ENCODE measurements at regions of chr10 and their contacts with region 1.

Region 1: GRCh38 chr10:102835007-102835482 is 2.2 kb downstream of the CYP17A1 start:
- DNase-seq: peak; percentile 74
- ATAC-seq: peak; percentile 99
- H3K4me3 ChIP-seq: no peak overlapping the region
- H3K27ac ChIP-seq: no peak overlapping the region; the same call in 1 of the 2 replicates
- H3K4me1 ChIP-seq: 0 out of 2 replicates have a peak, but pooled peaks cover 4% of the 10 kb centered on the region
- H3K27me3 ChIP-seq: no peaks in the 10 kb centered on the region
- CTCF ChIP-seq: peak; percentile 93

Region 2: DNA sequence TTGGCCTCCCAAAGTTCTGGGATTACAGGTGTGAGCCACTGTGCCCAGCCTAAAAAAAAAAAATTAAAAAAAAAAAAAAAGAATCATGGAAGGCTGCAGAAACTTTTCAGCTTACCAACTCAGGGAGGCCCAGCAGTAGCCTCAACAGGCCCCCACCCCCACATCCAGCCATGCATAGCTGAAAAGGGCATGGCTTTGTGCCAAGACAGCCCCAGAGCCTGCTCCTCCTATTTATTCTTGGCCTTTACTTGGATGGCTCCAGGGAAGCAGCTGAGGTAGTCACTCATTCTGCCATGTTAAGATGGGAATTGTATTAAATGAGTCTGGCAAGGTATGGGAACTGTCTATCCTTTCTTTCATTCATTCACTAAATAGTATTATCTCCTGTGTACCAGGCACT is 69.3 kb after region 1 on chr10:
- CTCF ChIA-PET with region 1: interaction called, 6 read pairs
- POLR2A ChIA-PET with region 1: no interaction called
- in situ Hi-C with region 1: no loop called
- intact Hi-C with region 1: loop called (anchors 1 kb)
- DNase-seq: no peak
- ATAC-seq: no peak
- H3K4me3 ChIP-seq: no peak overlapping the region
- H3K27ac ChIP-seq: no peak overlapping the region
- H3K4me1 ChIP-seq: no peaks in the 10 kb centered on the region
- H3K27me3 ChIP-seq: no peaks in the 10 kb centered on the region
- CTCF ChIP-seq: no peak

Region 3: GRCh38 chr10:103069453-103070331 is 234.6 kb after region 1 on chr10:
- CTCF ChIA-PET with region 1: no interaction called
- POLR2A ChIA-PET with region 1: no interaction called
- in situ Hi-C with region 1: no loop called
- intact Hi-C with region 1: loop called (anchors 10 kb)
- DNase-seq: no peak
- ATAC-seq: peak; percentile 84
- H3K4me3 ChIP-seq: no peak overlapping the region
- H3K27ac ChIP-seq: no peak overlapping the region
- H3K4me1 ChIP-seq: no peaks in the 10 kb centered on the region
- H3K27me3 ChIP-seq: no peaks in the 10 kb centered on the region
- CTCF ChIP-seq: peak; percentile 90

Measured in Panc1 (cell line).